CD4-positive, alpha-beta memory T cell (primary cell): ENCODE measurements at regions of chr16 and their contacts with region 1.

Region 1: DNA sequence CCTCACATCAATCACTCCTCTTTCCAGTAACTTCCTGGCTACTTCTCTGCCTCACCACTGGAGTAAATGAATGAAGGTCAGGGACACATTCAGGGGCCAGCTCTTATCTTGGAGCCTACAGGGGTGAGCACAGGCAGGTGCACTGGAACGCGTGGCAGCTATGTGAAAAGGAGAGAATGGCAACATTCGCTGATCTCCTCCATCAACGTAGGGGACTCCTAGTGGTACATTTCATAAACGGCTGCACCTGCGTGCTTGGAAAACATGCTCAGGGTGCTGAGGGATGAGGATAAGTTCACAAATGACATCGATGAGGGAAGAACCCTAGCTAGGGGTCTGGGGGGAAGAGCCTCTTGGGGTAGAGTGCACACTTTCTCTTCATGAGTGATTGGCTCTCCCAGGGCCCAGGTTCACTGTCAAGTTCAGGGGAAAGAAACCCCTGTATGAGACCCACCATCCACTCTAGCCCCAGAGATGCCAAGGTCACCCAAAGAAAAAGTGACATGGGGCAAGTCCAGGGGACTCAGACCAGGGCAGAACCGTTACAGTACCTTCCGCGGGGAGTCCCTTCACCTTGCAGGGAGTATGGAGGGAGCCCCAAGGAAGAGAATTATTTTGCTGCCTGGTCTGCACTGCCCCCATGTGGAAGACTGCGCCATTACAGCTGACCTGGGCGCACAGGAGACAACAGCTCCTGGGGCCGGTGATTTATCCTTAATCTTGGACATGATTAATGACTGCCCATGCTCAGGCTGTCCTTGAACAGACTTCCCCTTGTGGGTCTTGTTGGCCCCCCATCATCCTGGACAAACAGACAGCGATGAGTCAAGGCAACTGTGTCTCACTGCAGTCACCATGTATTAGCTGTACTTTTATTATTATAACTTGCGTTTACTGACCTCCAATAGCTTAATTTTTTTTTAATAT is 30.1 kb downstream of the VAC14 start:
- DNase-seq: peak in 4 of 5 donors; percentile 16 to 40 (median 22)
- H3K4me3 ChIP-seq: no peak overlapping the region
- H3K4me3 Mint-ChIP-seq: no peak overlapping the region
- H3K27ac ChIP-seq: no peak overlapping the region
- H3K27ac Mint-ChIP-seq: peak overlapping the region in 1 of 7 donors; percentile 19
- H3K4me1 ChIP-seq: no peaks in the 10 kb centered on the region
- H3K4me1 Mint-ChIP-seq: no peaks in the 10 kb centered on the region
- H3K27me3 ChIP-seq: no peaks in the 10 kb centered on the region
- H3K27me3 Mint-ChIP-seq: no peaks in the 10 kb centered on the region

Region 2: GRCh38 chr16:70679666-70680494 is 91.0 kb before region 1 on chr16:
- CTCF ChIA-PET with region 1: interaction called, 11 read pairs
- POLR2A ChIA-PET with region 1: no interaction called
- intact Hi-C with region 1: loop called (anchors 2 kb)
- DNase-seq: no peak
- H3K4me3 ChIP-seq: no peak overlapping the region
- H3K4me3 Mint-ChIP-seq: no peak overlapping the region
- H3K27ac ChIP-seq: no peak overlapping the region
- H3K27ac Mint-ChIP-seq: no peak overlapping the region
- H3K4me1 ChIP-seq: peaks cover 2% of the 10 kb centered on the region
- H3K4me1 Mint-ChIP-seq: peaks cover 0 to 1% (median 0%) of the 10 kb centered on the region in 4 donors
- H3K27me3 ChIP-seq: peaks cover 2% of the 10 kb centered on the region
- H3K27me3 Mint-ChIP-seq: peaks cover 8 to 12% of the 10 kb centered on the region in 2 donors

Region 3: DNA sequence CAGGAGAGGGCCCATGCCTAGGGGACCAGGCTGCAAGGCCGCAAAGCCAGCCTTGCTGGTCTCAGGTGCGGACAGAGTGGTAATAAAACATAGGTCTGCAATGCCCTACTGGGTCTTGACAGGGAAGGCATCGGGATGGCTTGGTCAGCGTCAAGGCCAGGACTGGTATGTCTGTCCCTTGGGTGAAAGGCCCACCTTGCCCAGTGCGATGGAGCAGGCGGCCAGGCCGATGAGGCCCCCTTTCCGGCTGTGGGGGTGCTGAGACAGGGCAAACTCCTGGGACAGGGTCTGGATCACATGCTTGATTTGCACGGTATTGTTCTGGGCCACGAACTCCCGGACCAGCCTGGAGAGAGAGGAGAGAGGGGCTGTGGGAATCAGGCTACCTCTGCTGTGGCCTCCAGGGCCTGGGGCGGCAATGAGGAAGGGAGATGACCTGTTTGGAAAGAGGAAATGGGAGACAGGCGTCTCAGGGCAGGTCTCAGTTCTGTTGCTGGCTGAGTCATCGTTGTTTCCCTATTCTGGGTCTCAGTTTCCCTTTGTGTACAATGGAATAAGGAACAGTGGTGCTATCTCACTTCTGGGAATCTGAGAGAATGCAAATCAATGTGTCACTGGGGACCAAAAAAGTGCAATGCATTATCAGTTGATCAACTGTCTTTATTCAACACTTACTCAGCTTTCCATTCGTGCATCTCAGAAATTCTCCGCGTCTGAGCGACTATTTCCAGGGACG is 15.3 kb after region 1 on chr16:
- CTCF ChIA-PET with region 1: interaction called, 13 read pairs
- POLR2A ChIA-PET with region 1: no interaction called
- intact Hi-C with region 1: no loop called
- DNase-seq: no peak
- H3K4me3 ChIP-seq: no peak overlapping the region
- H3K4me3 Mint-ChIP-seq: no peak overlapping the region
- H3K27ac ChIP-seq: no peak overlapping the region
- H3K27ac Mint-ChIP-seq: no peak overlapping the region
- H3K4me1 ChIP-seq: no peaks in the 10 kb centered on the region
- H3K4me1 Mint-ChIP-seq: peaks cover 0 to 13% (median 6%) of the 10 kb centered on the region in 4 donors
- H3K27me3 ChIP-seq: no peaks in the 10 kb centered on the region
- H3K27me3 Mint-ChIP-seq: no peaks in the 10 kb centered on the region